ENCODE measurements at regions of chr12 and their contacts with region 1.

Region 1: DNA sequence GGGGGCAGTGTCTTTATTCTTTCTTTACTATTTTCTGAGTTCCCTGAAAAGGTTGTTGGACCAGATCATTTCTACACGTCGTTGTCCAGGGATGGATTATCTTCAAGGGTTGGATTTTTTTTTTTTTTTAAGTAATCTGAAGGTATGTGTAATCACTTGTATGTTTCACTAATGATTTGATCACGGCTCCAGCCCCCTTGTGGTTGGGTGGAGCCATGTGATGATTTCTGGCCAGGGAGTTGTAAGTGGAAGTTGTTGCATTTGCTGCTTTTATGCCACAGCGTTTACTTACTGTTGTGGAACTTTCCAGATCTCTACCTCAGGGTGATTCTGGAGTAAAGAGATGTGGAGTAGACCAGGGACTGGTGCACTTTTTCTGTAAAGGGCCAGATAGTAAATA is 390.3 kb downstream of the AACS start:
- DNase-seq: no peak

Region 2: GRCh38 chr12:125340791-125341190 is 114.8 kb before region 1 on chr12:
- intact Hi-C with region 1: loop called (anchors 10 kb)
- DNase-seq: peak in 2 of 10 donors; percentile 28 to 86

Region 3: DNA sequence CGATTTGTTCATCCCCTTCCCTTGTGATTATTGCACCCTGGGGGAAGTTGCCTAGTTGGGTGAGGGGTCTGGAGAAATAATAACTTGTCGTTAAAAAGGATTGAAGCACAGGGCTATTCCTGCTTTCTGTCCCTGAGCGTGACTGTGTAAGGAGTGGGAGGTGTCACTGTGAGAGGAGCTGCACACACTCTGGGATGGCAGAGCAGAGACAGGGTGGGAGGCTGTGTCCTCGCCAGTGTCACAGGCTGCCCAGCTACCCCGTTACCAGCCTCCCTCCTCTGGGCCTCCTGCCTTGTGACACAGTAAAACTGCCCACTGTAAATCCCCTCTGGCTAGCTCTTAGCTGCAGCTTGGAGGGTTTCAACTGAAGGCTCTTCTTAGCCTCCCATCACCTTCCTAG is 70.3 kb after region 1 on chr12:
- intact Hi-C with region 1: loop called (anchors 2 kb)
- DNase-seq: peak in 2 of 10 donors; percentile 62 to 68

Region 4: GRCh38 chr12:125586441-125586840 is 130.9 kb after region 1 on chr12:
- intact Hi-C with region 1: no loop called
- DNase-seq: no peak

Measured in posterior cingulate gyrus (tissue), 11 donors.